Activated T-helper 2 cell treated with anti-CD3 and anti-CD28 coated beads, Interferon-gamma antibody, Interleukin-2, Interleukin-4, amounts not matched to agents 10 μg/mL and 5 μg/mL and 100 μg/mL, durations not matched to agents 14 hours and 24 hours and 36 hours (primary cell): ENCODE measurements at regions of chr11 and their contacts with region 1.

Region 1: GRCh38 chr11:113587308-113587739 is 112.1 kb upstream of the DRD2 start:
- DNase-seq: peak; percentile 65
- H3K4me3 Mint-ChIP-seq: peak overlapping the region; percentile 42
- H3K27ac Mint-ChIP-seq: peak overlapping the region; percentile 95
- H3K4me1 Mint-ChIP-seq: peaks cover 51% of the 10 kb centered on the region
- H3K27me3 Mint-ChIP-seq: no peaks in the 10 kb centered on the region

Region 2: GRCh38 chr11:112977755-112978154 is 609.6 kb before region 1 on chr11:
- intact Hi-C with region 1: no loop called
- DNase-seq: no peak
- H3K4me3 Mint-ChIP-seq: no peak overlapping the region
- H3K27ac Mint-ChIP-seq: no peak overlapping the region
- H3K4me1 Mint-ChIP-seq: no peaks in the 10 kb centered on the region
- H3K27me3 Mint-ChIP-seq: peaks cover 5% of the 10 kb centered on the region

Region 3: DNA sequence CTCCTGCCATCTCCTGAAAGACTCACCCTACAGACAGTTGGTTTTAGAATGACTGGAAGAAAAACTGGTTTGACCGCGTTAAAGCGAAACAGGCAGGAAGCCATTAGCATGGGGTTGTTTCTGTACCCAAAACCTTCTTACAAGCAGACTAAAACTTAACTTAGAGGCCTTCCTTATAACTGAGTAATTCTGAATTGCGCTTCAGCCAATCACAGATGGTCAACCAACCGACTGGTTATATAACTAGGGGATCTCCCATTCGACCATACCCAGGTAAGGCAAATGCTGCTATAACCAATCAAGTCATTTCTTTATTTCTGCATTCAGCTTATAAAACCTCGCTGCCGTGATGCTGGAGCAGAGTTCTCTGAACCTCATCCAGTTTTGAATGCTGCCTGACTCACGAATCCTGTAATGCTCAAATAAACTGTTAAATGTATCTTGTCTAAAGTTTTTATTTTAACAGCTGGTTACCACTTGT is 24.3 kb before region 1 on chr11:
- intact Hi-C with region 1: loop called (anchors 1 kb)
- DNase-seq: peak; percentile 14
- H3K4me3 Mint-ChIP-seq: no peak overlapping the region
- H3K27ac Mint-ChIP-seq: peak overlapping the region; percentile 79
- H3K4me1 Mint-ChIP-seq: peaks cover 28% of the 10 kb centered on the region
- H3K27me3 Mint-ChIP-seq: no peaks in the 10 kb centered on the region

Region 4: GRCh38 chr11:113571531-113571930 is 15.8 kb before region 1 on chr11:
- intact Hi-C with region 1: loop called (anchors 1 kb)
- DNase-seq: no peak
- H3K4me3 Mint-ChIP-seq: no peak overlapping the region
- H3K27ac Mint-ChIP-seq: no peak overlapping the region
- H3K4me1 Mint-ChIP-seq: peaks cover 18% of the 10 kb centered on the region
- H3K27me3 Mint-ChIP-seq: peaks cover 2% of the 10 kb centered on the region

Region 5: GRCh38 chr11:113675003-113675561 is 87.8 kb after region 1 on chr11:
- intact Hi-C with region 1: loop called (anchors 1 kb)
- DNase-seq: no peak
- H3K4me3 Mint-ChIP-seq: no peak overlapping the region
- H3K27ac Mint-ChIP-seq: no peak overlapping the region
- H3K4me1 Mint-ChIP-seq: peaks cover 30% of the 10 kb centered on the region
- H3K27me3 Mint-ChIP-seq: no peaks in the 10 kb centered on the region

Region 6: DNA sequence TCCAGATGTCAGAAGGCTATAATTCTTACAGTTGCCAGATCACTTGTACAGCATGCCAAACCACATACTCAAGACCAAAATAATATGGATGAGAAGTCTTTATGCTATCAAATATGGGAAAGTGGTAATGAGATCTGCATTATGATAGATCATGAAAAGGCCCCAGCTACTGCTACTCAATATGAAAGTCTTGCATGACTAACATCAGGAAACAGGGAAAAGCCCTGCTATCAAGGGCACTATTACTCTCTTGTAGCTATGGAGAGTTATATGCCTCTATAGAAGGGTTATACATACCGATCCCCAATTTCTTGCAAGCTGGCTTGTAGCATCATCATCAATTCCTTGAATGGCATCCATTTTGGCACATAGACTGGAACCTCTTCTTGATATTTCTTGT is 149.0 kb after region 1 on chr11:
- intact Hi-C with region 1: loop called (anchors 5 kb)
- DNase-seq: no peak
- H3K4me3 Mint-ChIP-seq: no peak overlapping the region
- H3K27ac Mint-ChIP-seq: no peak overlapping the region
- H3K4me1 Mint-ChIP-seq: peaks cover 6% of the 10 kb centered on the region
- H3K27me3 Mint-ChIP-seq: no peaks in the 10 kb centered on the region

Region 7: DNA sequence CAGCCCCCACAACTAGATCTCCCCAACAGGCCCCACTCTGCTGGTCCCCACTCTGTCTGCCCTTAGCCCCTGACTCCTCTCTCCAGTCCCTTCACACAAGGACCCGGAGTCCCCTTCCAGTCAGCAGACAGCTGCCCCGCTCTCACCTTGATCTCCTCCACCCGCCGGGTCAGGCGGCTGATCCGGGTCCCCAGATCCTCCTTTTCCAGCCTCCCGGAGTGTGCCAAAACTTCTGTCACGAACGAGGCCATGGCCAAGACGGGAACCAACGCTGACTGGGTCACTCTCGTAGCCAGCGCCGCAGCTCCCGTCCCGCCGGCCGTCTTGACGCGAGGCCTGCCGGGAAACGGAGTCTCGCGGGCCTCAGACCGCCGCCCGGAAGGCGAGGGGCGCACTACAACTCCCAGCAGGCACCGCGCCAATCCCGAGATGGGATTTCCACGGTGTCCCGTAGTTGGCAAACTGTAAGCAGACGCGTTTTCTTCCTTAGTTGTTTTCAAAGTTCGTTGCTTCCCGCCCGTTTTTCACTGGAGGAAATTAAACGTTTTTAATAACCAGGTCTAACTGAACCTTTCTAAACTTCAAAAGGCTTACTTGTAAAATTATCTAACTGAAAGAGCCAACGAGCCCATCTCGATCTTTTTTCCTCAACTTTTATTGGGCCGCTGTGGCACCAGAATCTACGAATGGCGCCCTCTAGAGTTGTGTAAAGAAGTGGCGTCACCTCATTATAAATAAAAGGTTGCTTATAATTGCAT is 186.3 kb after region 1 on chr11 and contains the start of gene ZW10:
- intact Hi-C with region 1: loop called (anchors 5 kb)
- DNase-seq: peak; percentile 90
- H3K4me3 Mint-ChIP-seq: peak within 1 kb of the TSS; percentile 98
- H3K27ac Mint-ChIP-seq: peak within 1 kb of the TSS; percentile 98
- H3K4me1 Mint-ChIP-seq: peaks cover 22% of the 10 kb centered on the region
- H3K27me3 Mint-ChIP-seq: peaks cover 12% of the 10 kb centered on the region
- total RNA-seq, gene ZW10: 24.4 TPM in 2 replicates